Activated CD4-positive, alpha-beta memory T cell treated with anti-CD3 and anti-CD28 coated beads, Interleukin-2, amount 10 ng/mL, durations not matched to agents 7 days and 5 days (primary cell): ENCODE measurements at regions of chr5 and their contacts with region 1.

Region 1: GRCh38 chr5:68287976-68288706 is 72.6 kb downstream of the PIK3R1 start:
- DNase-seq: peak; percentile 67
- H3K4me3 Mint-ChIP-seq: peak overlapping the region; percentile 84
- H3K27ac Mint-ChIP-seq: peak overlapping the region; percentile 94
- H3K4me1 Mint-ChIP-seq: peaks cover 86% of the 10 kb centered on the region
- H3K27me3 Mint-ChIP-seq: no peaks in the 10 kb centered on the region

Region 2: GRCh38 chr5:68141494-68141893 is 146.6 kb before region 1 on chr5:
- CTCF ChIA-PET with region 1: no interaction called
- POLR2A ChIA-PET with region 1: no interaction called
- DNase-seq: no peak
- H3K4me3 Mint-ChIP-seq: no peak overlapping the region
- H3K27ac Mint-ChIP-seq: no peak overlapping the region
- H3K4me1 Mint-ChIP-seq: peaks cover 2% of the 10 kb centered on the region
- H3K27me3 Mint-ChIP-seq: no peaks in the 10 kb centered on the region

Region 3: DNA sequence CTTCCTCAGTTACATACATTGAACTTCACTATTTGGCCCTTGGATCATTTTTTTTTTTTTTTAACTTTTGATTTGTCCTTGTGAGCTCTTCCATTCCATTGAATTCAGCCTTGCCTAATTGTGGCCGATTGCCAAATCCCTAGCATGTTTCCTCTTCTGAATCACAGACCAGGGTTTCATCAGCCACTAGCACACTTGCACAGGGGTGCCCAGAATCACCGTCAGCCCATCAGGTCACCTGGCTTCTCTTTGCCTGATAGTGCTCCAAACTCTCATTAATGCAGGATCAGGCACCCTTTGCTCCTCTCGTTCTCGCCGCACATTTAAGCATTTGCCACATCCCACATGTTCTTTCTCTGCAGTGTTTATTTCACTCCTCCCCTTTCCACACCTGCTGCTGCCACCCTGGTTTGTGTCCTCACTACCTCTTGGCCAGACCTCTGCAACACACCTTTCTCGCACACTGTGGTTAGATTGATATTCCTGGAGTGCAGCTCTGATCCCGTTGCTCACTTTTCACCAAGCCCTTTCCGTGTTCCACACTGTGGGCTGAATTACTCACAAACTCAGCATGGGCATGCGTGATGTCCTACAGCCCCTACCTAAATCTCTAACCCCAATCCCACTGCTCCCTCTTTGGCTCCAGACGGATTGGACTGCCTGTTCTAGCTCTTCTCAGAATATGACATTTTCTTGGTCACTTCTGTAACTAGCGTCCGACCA is 62.8 kb before region 1 on chr5:
- CTCF ChIA-PET with region 1: no interaction called
- POLR2A ChIA-PET with region 1: no interaction called
- DNase-seq: no peak
- H3K4me3 Mint-ChIP-seq: no peak overlapping the region
- H3K27ac Mint-ChIP-seq: no peak overlapping the region
- H3K4me1 Mint-ChIP-seq: peaks cover 53% of the 10 kb centered on the region
- H3K27me3 Mint-ChIP-seq: no peaks in the 10 kb centered on the region

Region 4: DNA sequence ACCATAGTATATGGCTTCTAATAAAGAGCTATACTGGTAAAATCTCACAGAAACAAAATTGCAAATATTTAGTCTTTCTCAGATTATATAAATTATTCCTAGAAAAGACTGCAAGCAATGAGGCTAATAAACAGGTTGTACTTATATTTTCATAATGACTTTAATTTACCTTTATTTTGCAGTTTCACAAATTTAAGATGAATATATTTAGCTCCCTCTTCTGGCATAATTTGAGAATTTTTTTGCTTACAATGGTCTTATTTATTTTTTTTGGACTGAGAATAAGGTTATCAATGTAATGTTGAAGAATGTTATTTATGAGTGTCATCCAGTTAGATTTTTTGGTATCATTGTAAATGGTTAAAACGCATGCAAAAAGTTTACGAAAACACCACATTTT is 15.9 kb before region 1 on chr5:
- CTCF ChIA-PET with region 1: interaction called, 21 read pairs
- POLR2A ChIA-PET with region 1: interaction called, 3 read pairs
- DNase-seq: no peak
- H3K4me3 Mint-ChIP-seq: no peak overlapping the region
- H3K27ac Mint-ChIP-seq: no peak overlapping the region
- H3K4me1 Mint-ChIP-seq: peaks cover 84% of the 10 kb centered on the region
- H3K27me3 Mint-ChIP-seq: no peaks in the 10 kb centered on the region

Region 5: DNA sequence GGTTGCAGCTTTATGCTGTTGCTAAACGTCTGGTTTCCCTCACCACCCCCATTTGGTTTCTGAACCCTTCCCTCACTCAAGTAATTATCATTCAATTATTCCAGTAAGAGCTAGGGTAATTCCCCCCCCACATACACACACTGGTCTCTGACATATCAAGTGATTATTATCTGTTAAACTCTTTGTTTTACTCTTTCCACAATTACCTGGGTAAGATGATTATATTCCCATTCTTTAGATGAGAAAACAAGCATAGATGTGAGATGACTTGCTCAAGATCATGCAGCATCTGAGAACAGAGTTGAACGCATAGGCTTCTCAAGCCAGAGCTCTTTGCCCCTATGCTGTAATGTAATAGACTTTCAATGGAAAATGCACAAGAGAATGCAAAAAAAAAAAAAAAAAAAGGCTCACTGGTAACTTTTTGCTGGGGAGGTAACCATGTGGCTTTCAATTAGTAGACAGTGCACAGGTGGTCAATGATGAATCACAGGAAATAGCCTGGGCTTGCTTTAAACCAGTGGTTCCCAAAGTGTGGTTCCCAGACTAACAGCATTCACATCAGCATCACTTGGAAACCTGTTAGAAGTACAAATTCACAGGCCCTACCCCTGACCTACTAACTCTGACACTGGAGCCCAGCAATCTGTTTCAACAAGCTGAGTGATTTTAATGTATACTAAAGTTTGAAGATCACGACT is 15.0 kb after region 1 on chr5:
- CTCF ChIA-PET with region 1: interaction called, 28 read pairs
- POLR2A ChIA-PET with region 1: interaction called, 7 read pairs
- DNase-seq: no peak
- H3K4me3 Mint-ChIP-seq: no peak overlapping the region
- H3K27ac Mint-ChIP-seq: peak overlapping the region; percentile 5
- H3K4me1 Mint-ChIP-seq: peaks cover 35% of the 10 kb centered on the region
- H3K27me3 Mint-ChIP-seq: no peaks in the 10 kb centered on the region

Region 6: DNA sequence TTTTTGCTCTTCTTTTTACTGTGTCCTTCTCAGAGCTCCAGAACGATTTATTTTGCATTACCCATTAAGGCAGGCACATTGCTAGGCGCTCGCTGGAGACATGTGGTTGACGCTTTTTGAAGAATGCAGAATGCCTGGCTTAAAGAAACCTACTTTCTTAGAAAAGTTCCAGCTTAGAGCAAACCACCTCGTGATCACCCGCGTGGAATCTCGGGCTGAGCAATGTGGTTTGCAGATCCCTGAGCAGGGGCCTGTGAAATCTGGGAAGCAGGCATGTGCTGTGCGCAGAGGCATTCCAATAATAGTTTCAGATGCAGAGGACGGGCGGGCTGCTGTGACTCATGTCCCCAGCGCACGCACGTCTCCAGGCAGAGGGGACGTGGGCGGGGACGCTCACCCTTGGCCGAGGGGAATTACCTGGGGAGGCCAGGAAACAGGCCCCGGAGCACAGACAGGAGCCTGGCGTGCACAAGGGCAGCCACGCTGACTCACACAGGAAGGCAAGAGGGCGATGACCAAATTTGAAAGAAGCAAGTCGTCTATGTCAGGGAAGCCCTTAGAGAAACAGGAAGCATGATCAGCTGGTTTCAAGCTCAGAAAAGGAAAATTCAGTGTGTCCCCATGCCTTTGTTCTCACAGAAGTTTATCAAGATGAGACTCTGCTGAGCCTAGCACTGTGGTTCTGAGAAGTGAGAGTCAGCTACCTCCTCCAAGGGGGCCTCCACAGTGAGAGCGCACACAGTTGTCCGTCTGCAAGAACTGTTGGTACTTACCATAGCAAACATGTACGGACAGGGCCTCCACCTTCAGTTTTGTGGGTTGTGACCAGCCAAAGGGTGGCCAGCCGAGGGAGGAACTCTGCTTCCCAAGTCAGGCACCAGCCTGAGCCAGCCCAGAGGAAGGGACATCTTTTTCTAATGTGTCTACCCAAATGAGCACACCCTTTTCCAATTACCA is 146.1 kb after region 1 on chr5:
- CTCF ChIA-PET with region 1: interaction called, 18 read pairs
- POLR2A ChIA-PET with region 1: interaction called, 3 read pairs
- DNase-seq: peak; percentile 91
- H3K4me3 Mint-ChIP-seq: peak overlapping the region; percentile 49
- H3K27ac Mint-ChIP-seq: peak overlapping the region; percentile 83
- H3K4me1 Mint-ChIP-seq: peaks cover 39% of the 10 kb centered on the region
- H3K27me3 Mint-ChIP-seq: peaks cover 35% of the 10 kb centered on the region

Region 7: DNA sequence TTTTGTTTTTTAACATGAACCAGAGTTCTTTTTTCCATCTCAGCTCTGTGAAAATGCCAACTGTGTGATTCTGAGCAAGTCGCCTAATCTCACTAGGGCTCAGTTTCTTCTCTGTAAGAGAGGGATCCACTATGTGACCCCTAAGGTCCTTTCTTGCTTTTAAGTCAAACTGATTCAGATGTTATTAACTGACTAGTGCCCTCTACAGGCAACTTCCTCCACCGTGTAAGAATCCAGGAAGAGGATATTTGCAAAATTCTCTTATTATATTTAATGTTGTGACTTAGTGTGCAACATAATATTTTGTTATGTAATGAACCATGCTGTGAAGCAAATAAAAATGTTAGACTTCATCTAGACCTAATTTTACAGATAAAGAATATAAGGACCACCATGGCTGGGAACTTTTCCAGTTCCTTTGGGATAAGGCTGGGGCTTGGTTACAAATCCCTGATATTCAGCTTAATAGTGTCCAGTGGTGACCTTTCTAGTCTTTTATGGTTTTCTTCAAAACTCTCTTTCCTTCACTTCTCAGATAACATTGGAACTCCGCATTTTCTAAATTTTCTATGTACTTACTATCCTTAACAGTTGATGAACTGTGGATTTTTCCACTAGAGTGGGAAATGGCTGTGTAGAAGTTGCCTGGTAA is 172.1 kb after region 1 on chr5:
- CTCF ChIA-PET with region 1: interaction called, 41 read pairs
- POLR2A ChIA-PET with region 1: interaction called, 8 read pairs
- DNase-seq: peak; percentile 43
- H3K4me3 Mint-ChIP-seq: no peak overlapping the region
- H3K27ac Mint-ChIP-seq: no peak overlapping the region
- H3K4me1 Mint-ChIP-seq: peaks cover 13% of the 10 kb centered on the region
- H3K27me3 Mint-ChIP-seq: no peaks in the 10 kb centered on the region